HepG2 (cell line): ENCODE measurements at regions of chr20 and their contacts with region 1.

Region 1: GRCh38 chr20:50189681-50190582 is 698 bp upstream of the CEBPB start:
- DNase-seq: peak; percentile 90
- ATAC-seq: peak; percentile 53
- H3K4me3 ChIP-seq: peak overlapping the region; percentile 80 to 99 (median 95)
- H3K27ac ChIP-seq: peak overlapping the region; percentile 79
- H3K4me1 ChIP-seq: peaks cover 66% of the 10 kb centered on the region
- H3K27me3 ChIP-seq: no peaks in the 10 kb centered on the region; a peak in 1 of 5 replicates
- CTCF ChIP-seq: peak; percentile 96
- EP300 ChIP-seq: peak in 1 of 2 experiments; percentile 31; a peak in 1 of 4 replicates
- POLR2A ChIP-seq: no peak
- RAD21 ChIP-seq: peak; percentile 96

Region 2: GRCh38 chr20:50153485-50154377 is 36.2 kb before region 1 on chr20 and contains the start of gene PEDS1:
- CTCF ChIA-PET with region 1: no interaction called
- POLR2A ChIA-PET with region 1: interaction called, 13 read pairs
- in situ Hi-C with region 1: no loop called
- intact Hi-C with region 1: no loop called
- DNase-seq: peak; percentile 83
- ATAC-seq: peak; percentile 95
- H3K4me3 ChIP-seq: peak within 1 kb of the TSS; percentile 91 to 98 (median 96)
- H3K27ac ChIP-seq: peak within 1 kb of the TSS; percentile 73
- H3K4me1 ChIP-seq: peaks cover 72% of the 10 kb centered on the region
- H3K27me3 ChIP-seq: peaks cover 0 to 4% of the 10 kb centered on the region in 2 experiments; a peak in 1 of 5 replicates
- CTCF ChIP-seq: no peak
- EP300 ChIP-seq: 0 out of 4 replicates have a peak, but pooled peaks of 1 of the 2 experiments have one; percentile 18
- POLR2A ChIP-seq: peak; percentile 89 to 93
- RAD21 ChIP-seq: peak; percentile 64
- total RNA-seq, gene PEDS1: 21.4 and 30.5 TPM in 2 replicates

Region 3: GRCh38 chr20:50278674-50279531 is 89.0 kb after region 1 on chr20:
- CTCF ChIA-PET with region 1: no interaction called
- POLR2A ChIA-PET with region 1: interaction called, 43 read pairs
- in situ Hi-C with region 1: loop called (anchors 5 kb)
- intact Hi-C with region 1: loop called (anchors 2 kb)
- DNase-seq: peak; percentile 87
- ATAC-seq: peak; percentile 72
- H3K4me3 ChIP-seq: peak overlapping the region in 2 of 3 experiments; percentile 2 to 36; a peak in 1 of 6 replicates
- H3K27ac ChIP-seq: no peak overlapping the region
- H3K4me1 ChIP-seq: peaks cover 96% of the 10 kb centered on the region
- H3K27me3 ChIP-seq: no peaks in the 10 kb centered on the region
- CTCF ChIP-seq: peak; percentile 89
- EP300 ChIP-seq: peak in 1 of 2 experiments; percentile 47; a peak in 1 of 4 replicates
- POLR2A ChIP-seq: no peak
- RAD21 ChIP-seq: peak; percentile 96

Region 4: GRCh38 chr20:50344232-50344925 is 154.4 kb after region 1 on chr20:
- CTCF ChIA-PET with region 1: interaction called, 4 read pairs
- POLR2A ChIA-PET with region 1: interaction called, 4 read pairs
- in situ Hi-C with region 1: loop called (anchors 5 kb)
- intact Hi-C with region 1: no loop called
- DNase-seq: peak; percentile 62
- ATAC-seq: peak; percentile 75
- H3K4me3 ChIP-seq: no peak overlapping the region; a peak in 1 of 6 replicates
- H3K27ac ChIP-seq: no peak overlapping the region
- H3K4me1 ChIP-seq: peaks cover 81% of the 10 kb centered on the region
- H3K27me3 ChIP-seq: peaks cover 3 to 42% of the 10 kb centered on the region in 2 experiments; a peak in 3 of 5 replicates
- CTCF ChIP-seq: peak; percentile 82
- EP300 ChIP-seq: peak in 1 of 2 experiments; percentile 14; a peak in 1 of 4 replicates
- POLR2A ChIP-seq: no peak
- RAD21 ChIP-seq: peak; percentile 82; the same call in 1 of the 2 replicates

Region 5: GRCh38 chr20:50395258-50395729 is 205.4 kb after region 1 on chr20:
- CTCF ChIA-PET with region 1: interaction called, 5 read pairs
- POLR2A ChIA-PET with region 1: interaction called, 93 read pairs
- in situ Hi-C with region 1: no loop called
- intact Hi-C with region 1: loop called (anchors 5 kb)
- DNase-seq: no peak
- ATAC-seq: no peak
- H3K4me3 ChIP-seq: no peak overlapping the region
- H3K27ac ChIP-seq: peak overlapping the region; percentile 23
- H3K4me1 ChIP-seq: peaks cover 95% of the 10 kb centered on the region
- H3K27me3 ChIP-seq: no peaks in the 10 kb centered on the region
- CTCF ChIP-seq: no peak
- EP300 ChIP-seq: no peak
- POLR2A ChIP-seq: no peak
- RAD21 ChIP-seq: no peak

Region 6: GRCh38 chr20:50484276-50484976 is 294.5 kb after region 1 on chr20:
- CTCF ChIA-PET with region 1: no interaction called
- POLR2A ChIA-PET with region 1: interaction called, 13 read pairs
- in situ Hi-C with region 1: no loop called
- intact Hi-C with region 1: no loop called
- DNase-seq: no peak
- ATAC-seq: no peak
- H3K4me3 ChIP-seq: peak overlapping the region in 2 of 3 experiments; percentile 54 to 69; a peak in 2 of 6 replicates
- H3K27ac ChIP-seq: no peak overlapping the region
- H3K4me1 ChIP-seq: peaks cover 25% of the 10 kb centered on the region
- H3K27me3 ChIP-seq: peaks cover 0 to 15% of the 10 kb centered on the region in 2 experiments; a peak in 2 of 5 replicates
- CTCF ChIP-seq: no peak
- EP300 ChIP-seq: no peak
- POLR2A ChIP-seq: no peak
- RAD21 ChIP-seq: no peak